T-cell (primary cell): ENCODE measurements at regions of chr1 and their contacts with region 1.

Region 1: GRCh38 chr1:74412244-74412643 is 100.2 kb downstream of the LRRC53 start:
- DNase-seq: no peak
- ATAC-seq: no peak
- H3K4me3 ChIP-seq: no peak overlapping the region
- H3K4me3 Mint-ChIP-seq: no peak overlapping the region
- H3K27ac ChIP-seq: no peak overlapping the region
- H3K27ac Mint-ChIP-seq: no peak overlapping the region
- H3K4me1 ChIP-seq: no peaks in the 10 kb centered on the region
- H3K4me1 Mint-ChIP-seq: no peaks in the 10 kb centered on the region
- H3K27me3 ChIP-seq: no peaks in the 10 kb centered on the region
- H3K27me3 Mint-ChIP-seq: no peaks in the 10 kb centered on the region

Region 2: DNA sequence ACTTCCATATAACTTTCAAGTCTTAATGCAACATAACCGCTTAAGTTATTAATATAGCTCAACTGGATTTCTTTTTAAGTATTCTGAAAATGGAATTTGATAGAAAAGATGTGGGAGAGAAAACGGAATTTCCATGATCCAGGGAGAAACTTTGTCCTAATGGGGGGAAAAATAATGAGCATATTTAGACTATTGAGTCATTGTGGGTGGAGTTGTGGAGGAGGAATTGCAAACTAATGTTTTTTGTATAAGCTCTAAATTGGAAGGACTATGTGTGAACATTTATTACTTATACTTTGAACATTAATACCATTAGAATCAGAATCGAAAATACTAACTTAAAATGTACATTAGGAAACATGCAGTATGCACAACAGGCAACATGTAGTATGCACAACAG is 1970.0 kb before region 1 on chr1:
- CTCF ChIA-PET with region 1: interaction called in 1 of 2 experiments, 12 read pairs
- POLR2A ChIA-PET with region 1: no interaction called
- DNase-seq: no peak
- ATAC-seq: no peak
- H3K4me3 ChIP-seq: no peak overlapping the region
- H3K4me3 Mint-ChIP-seq: no peak overlapping the region
- H3K27ac ChIP-seq: no peak overlapping the region
- H3K27ac Mint-ChIP-seq: no peak overlapping the region
- H3K4me1 ChIP-seq: no peaks in the 10 kb centered on the region
- H3K4me1 Mint-ChIP-seq: no peaks in the 10 kb centered on the region
- H3K27me3 ChIP-seq: no peaks in the 10 kb centered on the region
- H3K27me3 Mint-ChIP-seq: no peaks in the 10 kb centered on the region

Region 3: DNA sequence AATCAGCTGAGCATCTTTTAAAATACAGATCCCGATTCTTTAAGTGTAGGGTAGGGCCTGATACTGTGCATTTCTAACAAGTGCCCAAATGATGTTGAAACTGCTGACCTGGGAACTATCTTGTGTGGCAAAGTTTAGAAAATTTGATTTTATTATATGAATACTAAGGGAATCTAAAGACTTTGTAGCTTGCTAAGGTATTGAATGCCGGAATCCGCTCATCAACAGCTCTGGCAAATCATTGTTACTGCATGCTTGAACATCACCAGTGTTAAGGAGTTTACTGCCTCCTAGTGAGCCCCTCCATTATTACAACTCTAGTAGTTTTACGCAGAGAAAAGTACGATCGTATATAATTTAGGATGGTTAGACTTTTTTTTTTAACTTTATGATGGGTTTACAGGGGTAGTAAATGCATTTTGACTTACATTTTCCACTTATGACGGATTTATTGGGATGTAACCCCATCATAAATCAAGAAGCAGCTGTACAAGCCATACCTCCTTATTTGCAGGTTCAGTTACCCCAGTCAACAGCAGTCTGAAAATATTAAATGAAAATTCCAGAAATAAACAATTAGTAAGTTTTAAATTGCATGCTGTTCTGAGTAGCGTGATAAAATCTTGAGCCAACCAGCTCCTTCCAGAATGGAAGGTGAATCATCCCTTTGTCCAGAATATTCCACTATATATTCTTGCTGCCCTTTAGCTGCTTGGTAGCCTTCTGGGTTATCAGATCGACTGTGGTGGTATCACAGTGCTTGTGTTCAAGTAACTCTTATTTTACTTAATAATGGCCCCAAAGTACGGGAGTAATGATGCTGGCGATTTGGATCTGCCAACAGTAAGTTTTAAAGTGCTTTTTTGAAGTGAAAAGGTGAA is 321.6 kb after region 1 on chr1:
- CTCF ChIA-PET with region 1: no interaction called
- POLR2A ChIA-PET with region 1: no interaction called
- DNase-seq: peak in 24 of 35 experiments; percentile 3 to 79 (median 28)
- ATAC-seq: peak; percentile 62 to 73 (median 68)
- H3K4me3 ChIP-seq: peak overlapping the region; percentile 85 to 100
- H3K4me3 Mint-ChIP-seq: peak overlapping the region; percentile 89 to 96 (median 94)
- H3K27ac ChIP-seq: peak overlapping the region; percentile 88
- H3K27ac Mint-ChIP-seq: peak overlapping the region; percentile 96
- H3K4me1 ChIP-seq: peaks cover 11 to 23% of the 10 kb centered on the region in 2 experiments
- H3K4me1 Mint-ChIP-seq: peaks cover 46 to 58% (median 47%) of the 10 kb centered on the region in 3 donors
- H3K27me3 ChIP-seq: no peaks in the 10 kb centered on the region
- H3K27me3 Mint-ChIP-seq: no peaks in the 10 kb centered on the region